Activated T-helper 1 cell treated with anti-CD3 and anti-CD28 coated beads, Interleukin-12 subunit alpha, Interleukin-12 subunit beta, Interleukin-2, Interleukin-4 antibody, amounts not matched to agents 30 ng/mL and 10 ng/mL and 1 ng/mL, durations not matched to agents 14 hours and 24 hours and 36 hours (primary cell): ENCODE measurements at regions of chr2 and their contacts with region 1.

Region 1: DNA sequence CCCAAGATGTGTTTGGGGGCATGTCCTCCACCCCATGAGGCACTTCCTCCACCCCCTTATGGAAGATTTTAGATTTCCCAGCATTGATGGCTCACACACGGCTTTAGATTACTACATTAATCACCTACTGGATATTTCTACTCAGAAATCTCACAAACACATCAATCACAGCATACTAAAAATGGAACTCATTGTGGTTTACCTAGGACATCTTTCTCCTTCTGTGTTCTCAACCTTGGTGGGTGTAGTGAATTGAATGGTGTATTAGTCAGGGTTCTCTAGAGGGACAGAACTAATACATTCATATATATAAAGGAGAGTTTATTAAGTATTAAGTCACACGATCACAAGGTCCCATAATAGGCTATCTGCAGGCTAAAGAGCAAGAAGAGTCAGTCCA is 82.1 kb upstream of the CYRIA start:
- DNase-seq: no peak
- H3K4me3 Mint-ChIP-seq: no peak overlapping the region
- H3K27ac Mint-ChIP-seq: peak overlapping the region; percentile 54
- H3K4me1 Mint-ChIP-seq: peaks cover 26% of the 10 kb centered on the region
- H3K27me3 Mint-ChIP-seq: no peaks in the 10 kb centered on the region

Region 2: DNA sequence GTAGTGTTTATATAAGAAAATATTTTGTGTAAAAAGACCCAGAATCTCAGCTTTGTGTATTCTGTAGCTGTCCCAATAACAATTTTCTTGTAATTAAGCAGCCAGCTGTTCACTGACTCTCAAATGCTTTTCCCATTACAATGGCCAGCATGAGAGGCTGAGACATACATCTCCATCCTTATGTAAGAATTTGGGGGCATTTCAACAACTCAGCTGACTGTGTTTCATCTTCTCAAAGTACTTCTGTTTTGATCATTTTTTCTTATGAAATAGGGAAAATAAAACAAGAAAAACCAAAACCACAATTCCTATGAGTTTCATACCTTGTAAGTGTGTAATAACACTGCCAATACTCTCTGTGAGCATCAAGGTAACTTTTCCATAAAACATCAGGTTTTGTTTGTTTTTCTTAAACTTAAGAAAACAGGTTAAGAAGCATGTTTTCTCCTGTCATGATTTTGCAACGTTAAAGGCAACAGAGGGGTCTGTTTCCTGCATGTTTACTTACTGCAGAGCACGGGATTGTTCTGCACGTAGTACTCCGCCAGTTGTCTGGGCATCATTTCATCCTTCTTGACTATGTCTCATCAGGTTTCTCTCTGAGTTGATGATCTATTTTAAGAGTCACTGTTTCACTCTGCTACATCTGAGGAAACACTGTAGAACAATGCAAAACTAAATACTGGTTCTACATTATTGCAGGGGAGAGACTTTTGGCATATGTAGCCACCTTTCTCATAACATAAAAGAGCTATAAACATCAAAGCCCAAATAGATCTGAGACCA is 19.1 kb before region 1 on chr2:
- intact Hi-C with region 1: loop called (anchors 1 kb)
- DNase-seq: no peak
- H3K4me3 Mint-ChIP-seq: no peak overlapping the region
- H3K27ac Mint-ChIP-seq: peak overlapping the region; percentile 84
- H3K4me1 Mint-ChIP-seq: peaks cover 22% of the 10 kb centered on the region
- H3K27me3 Mint-ChIP-seq: peaks cover 4% of the 10 kb centered on the region